HCT116 (cell line): ENCODE measurements at regions of chr1 and their contacts with region 1.

Region 1: GRCh38 chr1:153626922-153627796 is at the start of gene S100A13:
- DNase-seq: peak; percentile 93
- ATAC-seq: peak; percentile 87
- H3K4me3 ChIP-seq: peak within 1 kb of the TSS; percentile 65 to 72
- H3K27ac ChIP-seq: peak within 1 kb of the TSS; percentile 89
- H3K4me1 ChIP-seq: peaks cover 18 to 34% of the 10 kb centered on the region in 2 experiments
- H3K27me3 ChIP-seq: no peaks in the 10 kb centered on the region
- CTCF ChIP-seq: peak in 2 of 3 experiments; percentile 87 to 89; a peak in 4 of 6 replicates
- POLR2A ChIP-seq: peak; percentile 94
- RAD21 ChIP-seq: no peak
- total RNA-seq, gene S100A13: 143 TPM

Region 2: GRCh38 chr1:153238536-153238935 is 388.6 kb before region 1 on chr1:
- CTCF ChIA-PET with region 1: no interaction called
- POLR2A ChIA-PET with region 1: no interaction called
- RAD21 ChIA-PET with region 1: no interaction called
- intact Hi-C with region 1: no loop called
- DNase-seq: peak; percentile 4
- ATAC-seq: peak; percentile 86
- H3K4me3 ChIP-seq: no peak overlapping the region
- H3K27ac ChIP-seq: no peak overlapping the region
- H3K4me1 ChIP-seq: no peaks in the 10 kb centered on the region
- H3K27me3 ChIP-seq: peaks cover 10% of the 10 kb centered on the region; the same call in 1 of the 2 replicates
- CTCF ChIP-seq: peak; percentile 29 to 48 (median 41); a peak in 5 of 6 replicates
- POLR2A ChIP-seq: no peak
- RAD21 ChIP-seq: peak; percentile 35

Region 3: GRCh38 chr1:153441238-153441933 is 185.8 kb before region 1 on chr1:
- CTCF ChIA-PET with region 1: no interaction called
- POLR2A ChIA-PET with region 1: no interaction called
- RAD21 ChIA-PET with region 1: no interaction called
- intact Hi-C with region 1: no loop called
- DNase-seq: no peak
- ATAC-seq: no peak
- H3K4me3 ChIP-seq: no peak overlapping the region
- H3K27ac ChIP-seq: no peak overlapping the region
- H3K4me1 ChIP-seq: no peaks in the 10 kb centered on the region
- H3K27me3 ChIP-seq: peaks cover 78% of the 10 kb centered on the region
- CTCF ChIP-seq: no peak
- POLR2A ChIP-seq: no peak
- RAD21 ChIP-seq: no peak

Region 4: GRCh38 chr1:153577624-153578051 is 49.5 kb before region 1 on chr1:
- CTCF ChIA-PET with region 1: interaction called, 28 read pairs
- POLR2A ChIA-PET with region 1: interaction called, 12 read pairs
- RAD21 ChIA-PET with region 1: interaction called in 1 of 2 experiments, 6 read pairs
- intact Hi-C with region 1: loop called (anchors 1 kb)
- DNase-seq: no peak
- ATAC-seq: peak; percentile 46
- H3K4me3 ChIP-seq: no peak overlapping the region
- H3K27ac ChIP-seq: no peak overlapping the region
- H3K4me1 ChIP-seq: peaks cover 12 to 32% of the 10 kb centered on the region in 2 experiments
- H3K27me3 ChIP-seq: no peaks in the 10 kb centered on the region
- CTCF ChIP-seq: no peak
- POLR2A ChIP-seq: no peak
- RAD21 ChIP-seq: no peak

Region 5: GRCh38 chr1:153608742-153609584 is 18.2 kb before region 1 on chr1:
- CTCF ChIA-PET with region 1: interaction called, 76 read pairs
- POLR2A ChIA-PET with region 1: interaction called, 172 read pairs
- RAD21 ChIA-PET with region 1: interaction called, 4 to 5 read pairs
- intact Hi-C with region 1: no loop called
- DNase-seq: peak; percentile 90
- ATAC-seq: peak; percentile 70
- H3K4me3 ChIP-seq: peak overlapping the region; percentile 51 to 59
- H3K27ac ChIP-seq: peak overlapping the region; percentile 72
- H3K4me1 ChIP-seq: peaks cover 41 to 64% of the 10 kb centered on the region in 2 experiments
- H3K27me3 ChIP-seq: no peaks in the 10 kb centered on the region
- CTCF ChIP-seq: no peak
- POLR2A ChIP-seq: peak; percentile 34
- RAD21 ChIP-seq: no peak